PC-9 (cell line): ENCODE measurements at regions of chr16 and their contacts with region 1.

Region 1: DNA sequence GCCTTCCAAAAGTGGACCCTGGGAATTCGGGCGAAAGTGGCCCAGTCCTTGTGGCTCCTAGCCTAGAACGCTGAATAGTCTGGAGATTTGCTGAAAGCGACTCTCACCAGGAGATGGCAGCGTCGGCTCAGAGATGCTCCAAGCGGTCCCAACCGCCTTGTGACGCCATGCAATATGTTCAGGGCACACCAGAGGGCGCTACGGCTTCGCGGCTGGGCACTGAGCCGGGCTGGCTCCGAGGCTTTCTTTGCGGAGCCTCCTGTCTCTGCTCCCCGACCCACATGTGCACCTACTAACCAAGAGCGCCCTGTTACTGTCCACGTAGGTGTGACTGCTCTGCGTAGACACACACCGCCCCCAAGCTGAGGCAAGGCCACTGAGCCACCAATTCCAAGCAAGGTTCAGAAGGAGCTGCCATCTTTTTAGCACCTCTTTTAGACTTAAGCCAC is 36.9 kb downstream of the SYCE1L start:
- DNase-seq: peak; percentile 62 to 78
- H3K4me3 ChIP-seq: peak overlapping the region; percentile 37; the same call in 1 of the 2 replicates
- H3K27ac ChIP-seq: no peak overlapping the region
- H3K4me1 ChIP-seq: peaks cover 8% of the 10 kb centered on the region; the same call in 1 of the 2 replicates
- H3K27me3 ChIP-seq: peaks cover 8% of the 10 kb centered on the region; the same call in 1 of the 2 replicates
- CTCF ChIP-seq: peak; percentile 98

Region 2: GRCh38 chr16:77584205-77584859 is 348.2 kb after region 1 on chr16:
- CTCF ChIA-PET with region 1: interaction called, 3 read pairs
- POLR2A ChIA-PET with region 1: no interaction called
- intact Hi-C with region 1: loop called (anchors 1 kb)
- DNase-seq: peak; percentile 21 to 40
- H3K4me3 ChIP-seq: no peak overlapping the region
- H3K27ac ChIP-seq: no peak overlapping the region
- H3K4me1 ChIP-seq: no peaks in the 10 kb centered on the region
- H3K27me3 ChIP-seq: peaks cover 26% of the 10 kb centered on the region
- CTCF ChIP-seq: peak; percentile 96

Region 3: DNA sequence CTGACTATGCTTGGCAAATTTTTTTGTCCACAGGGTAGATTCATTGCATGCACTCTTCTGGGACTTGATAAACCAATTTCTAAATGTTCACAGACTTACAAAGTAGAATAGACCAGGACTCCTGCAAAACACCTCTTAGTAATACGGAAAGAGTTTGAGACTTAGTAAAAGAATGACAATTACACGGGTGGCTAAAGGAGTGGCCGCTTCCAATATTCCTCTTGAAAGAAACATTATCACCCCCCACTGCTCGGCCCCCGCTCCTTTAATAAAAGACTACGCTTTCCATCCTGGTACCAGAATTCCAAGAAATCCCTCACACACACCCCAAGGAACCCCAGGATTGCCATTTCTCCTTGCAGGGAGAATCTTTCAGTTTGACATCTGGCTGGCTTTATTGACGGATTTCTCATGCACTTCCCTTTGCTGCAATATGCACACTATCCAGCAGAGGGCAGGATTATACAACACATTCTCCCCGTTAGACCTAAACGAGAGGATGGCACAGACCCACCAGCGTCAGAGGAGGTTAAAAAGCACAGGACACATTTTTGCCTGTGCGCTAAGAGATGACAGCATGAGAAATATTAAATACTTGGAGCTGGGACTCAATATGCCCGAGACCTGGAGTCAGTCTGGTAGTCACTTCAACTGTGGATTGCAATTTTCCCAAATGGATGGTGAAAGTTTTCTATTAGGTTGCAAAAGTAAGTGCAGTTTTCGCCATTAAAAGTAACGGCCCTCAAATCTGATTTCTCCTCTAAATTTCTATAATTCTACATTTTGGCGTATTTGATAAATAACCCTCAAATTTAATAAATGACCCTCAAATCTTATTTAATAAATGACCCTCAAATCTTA is 439.6 kb after region 1 on chr16:
- CTCF ChIA-PET with region 1: no interaction called
- POLR2A ChIA-PET with region 1: no interaction called
- intact Hi-C with region 1: loop called (anchors 5 kb)
- DNase-seq: peak; percentile 38 to 44
- H3K4me3 ChIP-seq: no peak overlapping the region
- H3K27ac ChIP-seq: no peak overlapping the region
- H3K4me1 ChIP-seq: no peaks in the 10 kb centered on the region
- H3K27me3 ChIP-seq: peaks cover 26% of the 10 kb centered on the region; the same call in 1 of the 2 replicates
- CTCF ChIP-seq: peak; percentile 92

Region 4: GRCh38 chr16:77971306-77972271 is 735.5 kb after region 1 on chr16:
- CTCF ChIA-PET with region 1: interaction called, 3 read pairs
- POLR2A ChIA-PET with region 1: no interaction called
- intact Hi-C with region 1: loop called (anchors 1 kb)
- DNase-seq: peak in 1 of 2 experiments; percentile 39
- H3K4me3 ChIP-seq: no peak overlapping the region
- H3K27ac ChIP-seq: no peak overlapping the region
- H3K4me1 ChIP-seq: no peaks in the 10 kb centered on the region
- H3K27me3 ChIP-seq: peaks cover 20% of the 10 kb centered on the region
- CTCF ChIP-seq: peak; percentile 82

Region 5: DNA sequence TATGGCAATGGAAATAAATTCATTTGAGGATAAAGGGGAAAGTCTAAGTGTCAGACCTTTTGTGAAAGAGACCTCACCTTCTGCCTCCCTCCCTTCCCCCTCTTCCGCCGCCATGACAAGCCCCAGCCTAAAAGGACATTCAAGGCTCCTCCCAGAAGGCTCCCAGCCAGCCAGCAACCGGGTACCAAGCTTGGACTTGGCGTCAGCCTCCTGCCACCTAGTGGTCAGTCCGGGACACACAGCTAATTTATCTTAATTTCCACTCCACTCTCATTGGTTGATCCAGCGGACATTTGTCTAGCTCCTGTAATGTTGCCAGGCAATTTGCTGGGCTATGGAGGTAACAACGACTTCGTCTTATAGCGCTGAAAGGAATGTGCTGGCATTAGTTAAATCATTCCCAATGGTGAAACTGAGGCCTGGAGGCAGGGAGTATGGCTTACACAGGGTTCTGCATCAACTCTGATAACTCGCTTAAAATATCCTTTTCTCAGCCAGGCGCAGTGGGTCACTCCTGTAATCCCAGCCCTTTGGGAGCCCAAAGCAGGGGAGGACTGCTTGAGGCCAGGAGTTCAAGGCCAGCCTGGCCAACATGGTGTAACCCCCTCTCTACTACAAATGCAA is 766.9 kb after region 1 on chr16:
- CTCF ChIA-PET with region 1: no interaction called
- POLR2A ChIA-PET with region 1: no interaction called
- intact Hi-C with region 1: loop called (anchors 5 kb)
- DNase-seq: peak; percentile 57 to 63
- H3K4me3 ChIP-seq: no peak overlapping the region
- H3K27ac ChIP-seq: no peak overlapping the region
- H3K4me1 ChIP-seq: no peaks in the 10 kb centered on the region
- H3K27me3 ChIP-seq: peaks cover 15% of the 10 kb centered on the region
- CTCF ChIP-seq: peak; percentile 91

Region 6: DNA sequence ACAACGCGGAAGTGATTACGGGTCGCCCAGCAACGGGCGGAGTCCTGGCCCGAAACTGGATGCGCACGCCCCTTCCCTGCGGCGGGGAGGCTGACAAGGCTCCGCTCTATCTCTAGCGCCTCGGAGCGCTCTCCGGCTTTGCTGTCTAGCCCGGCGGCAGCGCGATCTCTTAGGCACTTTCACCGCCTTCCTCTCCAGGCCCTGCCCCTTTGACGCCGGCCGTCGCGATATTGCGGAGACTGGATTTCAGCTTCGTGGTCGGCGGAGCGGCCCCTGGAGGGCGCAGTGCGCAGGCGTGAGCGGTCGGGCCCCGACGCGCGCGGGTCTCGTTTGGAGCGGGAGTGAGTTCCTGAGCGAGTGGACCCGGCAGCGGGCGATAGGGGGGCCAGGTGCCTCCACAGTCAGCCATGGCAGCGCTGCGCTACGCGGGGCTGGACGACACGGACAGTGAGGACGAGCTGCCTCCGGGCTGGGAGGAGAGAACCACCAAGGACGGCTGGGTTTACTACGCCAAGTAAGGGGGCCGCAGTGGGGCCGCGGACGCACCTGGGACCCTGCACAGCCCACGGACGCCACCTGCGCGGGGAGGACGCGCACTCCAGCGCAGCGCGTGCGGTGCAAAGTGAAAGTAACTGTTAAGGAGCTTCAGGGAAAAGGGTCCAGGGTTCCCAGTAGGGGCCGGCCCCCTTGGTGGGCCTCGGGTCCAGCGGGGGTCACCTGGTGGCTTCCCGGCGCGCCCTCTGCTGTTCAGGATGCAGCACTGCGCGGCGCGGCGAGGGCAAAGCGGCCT is 863.5 kb after region 1 on chr16 and contains the start of gene WWOX:
- CTCF ChIA-PET with region 1: no interaction called
- POLR2A ChIA-PET with region 1: no interaction called
- intact Hi-C with region 1: loop called (anchors 1 kb)
- DNase-seq: peak; percentile 94 to 95
- H3K4me3 ChIP-seq: peak within 1 kb of the TSS; percentile 83
- H3K27ac ChIP-seq: peak within 1 kb of the TSS; percentile 72
- H3K4me1 ChIP-seq: peaks cover 11% of the 10 kb centered on the region
- H3K27me3 ChIP-seq: peaks cover 8% of the 10 kb centered on the region
- CTCF ChIP-seq: peak; percentile 95
- total RNA-seq, gene WWOX: 33.3 and 35.6 TPM in 2 replicates